HEK293T (cell line): ENCODE measurements at regions of chr2 and their contacts with region 1.

Region 1: DNA sequence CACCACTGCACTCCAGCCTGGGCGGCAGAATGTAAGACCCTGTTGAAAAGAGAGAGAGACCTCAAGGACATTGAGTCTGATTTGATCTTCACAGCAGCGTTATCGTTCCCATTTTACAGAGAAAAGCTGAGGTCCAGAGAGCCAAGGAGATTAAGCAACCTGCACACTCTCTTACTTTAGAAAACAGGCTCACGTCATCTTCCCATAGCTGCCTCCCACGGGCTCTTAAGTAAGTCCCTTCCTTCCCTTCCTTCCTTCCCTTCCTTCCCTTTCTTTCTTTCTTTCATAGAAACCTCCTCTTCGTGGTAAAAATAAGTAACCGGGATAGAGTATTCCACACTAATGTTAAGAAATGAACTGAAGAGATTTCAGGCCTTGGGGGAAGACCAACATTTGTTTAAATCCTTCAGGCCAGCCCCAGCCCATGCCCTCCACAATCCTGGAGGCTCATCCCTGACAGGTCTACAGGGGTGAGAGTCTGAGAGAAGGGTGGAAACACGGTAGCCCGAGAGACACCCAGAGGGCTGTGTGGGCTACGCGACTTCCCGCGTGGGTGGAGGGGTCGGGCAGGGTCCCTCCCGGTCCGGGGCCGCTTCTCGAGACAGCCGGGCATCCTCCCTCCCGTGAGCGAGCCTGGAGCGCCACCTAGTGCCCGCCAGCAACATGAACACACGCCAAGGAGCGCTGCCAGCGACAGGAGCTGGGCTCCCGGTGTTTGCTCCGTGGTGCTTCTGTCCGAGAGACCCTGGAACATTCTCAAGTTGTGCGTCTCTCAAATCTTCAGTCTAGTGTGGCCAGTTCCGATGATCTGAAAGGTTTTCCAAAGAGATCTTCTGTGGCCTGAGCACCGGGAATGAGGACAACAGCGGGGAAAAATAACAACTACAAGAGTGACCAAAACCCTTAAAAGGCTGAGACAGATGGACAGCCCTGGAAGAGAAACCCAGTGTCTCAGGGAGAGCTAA is 160.3 kb downstream of the INO80D start:
- DNase-seq: peak; percentile 89

Region 2: DNA sequence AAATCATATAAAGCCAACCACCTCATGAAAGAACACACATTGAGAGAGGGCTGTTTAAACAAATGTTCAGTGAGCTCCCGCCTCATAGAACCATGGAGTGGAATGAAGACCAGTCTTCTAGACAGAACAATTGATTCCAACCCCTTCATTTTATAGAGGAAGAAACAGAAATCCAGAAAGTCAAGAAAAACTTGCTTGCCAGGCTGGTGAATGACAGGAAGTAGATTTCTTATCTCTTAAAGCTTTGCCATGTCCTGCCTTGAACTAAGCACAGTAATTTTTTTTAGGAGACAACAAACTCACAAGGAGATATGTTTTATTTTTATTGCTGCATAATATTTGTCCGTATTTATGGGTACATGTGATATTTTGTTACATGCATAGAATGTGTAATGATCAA is 259.8 kb before region 1 on chr2:
- CTCF ChIA-PET with region 1: no interaction called
- POLR2A ChIA-PET with region 1: no interaction called
- DNase-seq: no peak

Region 3: GRCh38 chr2:205776139-205776538 is 149.5 kb before region 1 on chr2:
- CTCF ChIA-PET with region 1: interaction called, 25 read pairs
- POLR2A ChIA-PET with region 1: no interaction called
- DNase-seq: peak; percentile 66

Region 4: DNA sequence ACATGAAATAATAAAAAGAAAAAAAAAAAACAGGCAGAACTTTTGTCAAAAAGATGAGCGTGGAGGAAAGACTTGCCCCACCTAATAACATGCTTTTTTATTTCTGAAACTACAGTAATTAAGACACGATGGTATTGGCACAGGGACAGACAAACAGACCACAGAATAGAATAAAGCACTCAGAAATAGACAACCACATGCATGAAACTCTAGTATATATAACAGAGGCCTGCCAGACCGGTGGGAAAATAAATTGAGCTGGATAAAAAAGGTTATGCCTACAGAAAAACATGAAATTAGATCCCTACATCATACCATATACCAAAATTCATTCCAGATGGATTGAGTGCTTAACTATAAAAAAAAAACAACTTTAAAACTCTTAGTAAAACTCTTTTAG is 80.2 kb before region 1 on chr2:
- CTCF ChIA-PET with region 1: no interaction called
- POLR2A ChIA-PET with region 1: no interaction called
- DNase-seq: no peak

Region 5: GRCh38 chr2:205892251-205892655 is 33.4 kb before region 1 on chr2:
- CTCF ChIA-PET with region 1: no interaction called
- POLR2A ChIA-PET with region 1: no interaction called
- DNase-seq: no peak

Region 6: DNA sequence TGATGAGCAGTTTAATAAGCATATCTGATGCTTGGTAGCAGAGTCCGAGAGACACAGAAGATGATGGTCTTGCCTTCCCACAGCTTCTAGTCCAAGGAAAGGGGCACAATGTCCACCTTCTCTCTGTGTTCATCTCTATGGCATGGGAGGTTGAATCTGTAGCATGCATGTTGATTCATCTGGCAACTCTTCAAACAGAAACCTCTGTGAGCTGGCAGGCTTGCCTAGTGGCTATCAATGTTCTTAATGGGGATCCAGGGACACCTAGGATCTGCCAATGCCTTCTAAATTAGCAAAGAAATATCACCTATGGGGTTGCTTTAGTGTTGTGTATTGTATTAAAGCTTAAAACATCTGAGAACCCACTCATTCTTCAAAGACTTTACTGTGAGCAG is 10.5 kb before region 1 on chr2:
- CTCF ChIA-PET with region 1: interaction called, 11 read pairs
- POLR2A ChIA-PET with region 1: no interaction called
- DNase-seq: no peak